Endothelial cell of umbilical vein (primary cell): ENCODE measurements at regions of chr18 and their contacts with region 1.

Region 1: DNA sequence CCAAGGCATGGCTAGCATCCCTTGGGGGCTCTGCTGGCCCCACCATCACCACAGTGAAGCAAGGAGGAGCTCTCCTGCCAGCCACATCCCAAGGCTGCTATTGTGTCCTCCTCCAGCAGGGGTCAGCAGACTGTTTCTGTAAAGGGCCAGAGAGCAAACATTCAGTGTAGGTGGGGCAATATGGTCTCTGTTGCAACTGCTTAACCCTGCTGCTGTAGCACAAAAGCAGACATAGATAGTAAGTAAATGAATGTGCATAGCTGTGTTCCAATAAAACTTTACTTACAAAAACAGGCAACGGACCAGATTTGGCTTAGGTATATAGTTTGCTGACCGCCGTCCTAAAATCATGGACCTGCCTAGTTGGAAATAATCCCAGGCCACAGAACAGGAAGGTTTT is 36.4 kb upstream of the ZBTB7C start:
- DNase-seq: peak; percentile 64
- H3K4me3 ChIP-seq: no peak overlapping the region
- H3K27ac ChIP-seq: no peak overlapping the region
- H3K4me1 ChIP-seq: peaks cover 7% of the 10 kb centered on the region
- H3K27me3 ChIP-seq: peaks cover 23 to 34% of the 10 kb centered on the region in 2 experiments
- CTCF ChIP-seq: peak; percentile 89 to 95
- POLR2A ChIP-seq: no peak

Region 2: DNA sequence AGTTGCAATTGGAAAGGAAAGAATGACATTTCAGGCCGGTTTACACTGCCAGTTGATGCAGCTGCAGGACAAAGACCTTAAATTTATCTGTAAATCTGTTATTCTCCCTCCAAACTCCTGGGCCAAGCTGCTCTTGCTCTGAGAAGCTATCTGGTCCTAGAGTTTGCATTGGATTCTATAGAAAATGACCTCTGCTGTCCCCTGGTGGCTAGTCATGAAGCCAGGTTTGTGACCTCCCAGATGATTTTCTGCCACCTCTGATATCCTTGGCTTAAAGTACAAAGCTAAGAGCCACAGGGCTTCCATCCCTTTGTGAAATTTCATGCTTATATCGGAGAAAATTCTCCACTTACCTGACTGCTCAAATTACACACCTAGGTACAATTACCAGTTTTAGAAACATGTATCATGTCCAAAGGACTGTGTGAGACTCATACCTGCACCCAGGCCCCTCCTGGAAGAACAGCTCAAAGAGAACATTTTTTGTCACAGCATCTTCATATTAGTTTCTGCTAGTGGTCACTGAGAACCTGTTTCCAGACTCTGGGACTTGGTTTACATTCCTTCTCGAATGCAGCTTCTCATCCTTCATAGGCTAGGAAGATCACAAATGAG is 1240.5 kb before region 1 on chr18:
- CTCF ChIA-PET with region 1: no interaction called
- POLR2A ChIA-PET with region 1: no interaction called
- dilution Hi-C with region 1: no loop called
- intact Hi-C with region 1: no loop called
- DNase-seq: peak; percentile 48
- H3K4me3 ChIP-seq: no peak overlapping the region
- H3K27ac ChIP-seq: no peak overlapping the region
- H3K4me1 ChIP-seq: no peaks in the 10 kb centered on the region
- H3K27me3 ChIP-seq: peaks cover 5 to 12% of the 10 kb centered on the region in 2 experiments
- CTCF ChIP-seq: peak; percentile 73 to 78
- POLR2A ChIP-seq: no peak

Region 3: DNA sequence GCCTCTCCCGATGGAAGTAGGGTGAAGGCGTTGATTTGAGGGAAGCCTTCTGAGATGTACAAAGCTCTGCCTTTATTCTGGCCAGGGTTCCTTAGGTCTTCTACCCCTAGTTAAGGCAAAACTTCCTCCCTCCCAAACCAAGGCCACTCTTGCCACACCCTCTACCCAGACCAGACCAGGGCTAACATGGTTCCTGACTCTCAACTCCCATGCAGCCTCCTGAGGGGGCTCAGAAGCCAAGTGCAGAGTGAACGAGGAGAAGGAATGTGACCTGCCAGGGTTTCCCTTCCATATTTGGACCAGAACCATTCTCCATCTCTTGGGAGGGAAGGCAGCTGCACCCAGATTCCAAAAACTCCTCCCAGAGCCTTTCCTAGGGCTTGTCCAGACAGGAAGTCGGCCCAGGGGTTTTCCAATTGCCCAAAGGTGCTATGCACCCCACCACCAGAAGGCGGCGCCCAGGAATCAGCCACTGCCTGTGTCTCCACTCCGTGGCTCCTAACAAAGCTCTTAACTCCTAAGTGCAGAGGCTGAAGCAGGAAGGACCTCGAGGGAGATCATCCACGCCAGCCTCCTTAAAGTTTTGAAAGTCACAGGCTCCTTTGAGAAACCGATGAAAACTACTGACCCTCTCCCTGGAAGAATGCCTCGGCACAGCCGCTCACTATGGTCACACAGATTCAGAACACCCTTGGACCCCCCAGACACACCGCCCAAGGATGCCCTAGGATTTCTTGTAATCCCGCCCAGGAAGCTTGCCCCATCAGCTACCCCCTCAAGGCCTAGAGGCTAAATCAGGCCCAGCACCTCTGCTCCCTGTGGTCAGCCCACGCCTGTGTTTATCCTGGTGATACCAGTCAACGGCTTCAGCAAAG is 672.9 kb before region 1 on chr18:
- CTCF ChIA-PET with region 1: interaction called, 8 read pairs
- POLR2A ChIA-PET with region 1: no interaction called
- dilution Hi-C with region 1: no loop called
- intact Hi-C with region 1: loop called (anchors 1 kb)
- DNase-seq: peak; percentile 76
- H3K4me3 ChIP-seq: no peak overlapping the region
- H3K27ac ChIP-seq: no peak overlapping the region
- H3K4me1 ChIP-seq: no peaks in the 10 kb centered on the region
- H3K27me3 ChIP-seq: peaks cover 4% of the 10 kb centered on the region in 2 experiments
- CTCF ChIP-seq: peak; percentile 73 to 95
- POLR2A ChIP-seq: no peak

Region 4: GRCh38 chr18:48030616-48031480 is 414.7 kb before region 1 on chr18:
- CTCF ChIA-PET with region 1: interaction called, 37 read pairs
- POLR2A ChIA-PET with region 1: no interaction called
- dilution Hi-C with region 1: no loop called
- intact Hi-C with region 1: loop called (anchors 1 kb)
- DNase-seq: peak; percentile 35
- H3K4me3 ChIP-seq: no peak overlapping the region
- H3K27ac ChIP-seq: no peak overlapping the region
- H3K4me1 ChIP-seq: no peaks in the 10 kb centered on the region
- H3K27me3 ChIP-seq: no peaks in the 10 kb centered on the region
- CTCF ChIP-seq: peak; percentile 66 to 72
- POLR2A ChIP-seq: no peak

Region 5: GRCh38 chr18:48161191-48161910 is 284.2 kb before region 1 on chr18:
- CTCF ChIA-PET with region 1: interaction called, 3 read pairs
- POLR2A ChIA-PET with region 1: no interaction called
- dilution Hi-C with region 1: no loop called
- intact Hi-C with region 1: loop called (anchors 5 kb)
- DNase-seq: peak; percentile 26
- H3K4me3 ChIP-seq: peak overlapping the region; percentile 12 to 54 (median 46)
- H3K27ac ChIP-seq: no peak overlapping the region
- H3K4me1 ChIP-seq: peaks cover 4% of the 10 kb centered on the region
- H3K27me3 ChIP-seq: peaks cover 7 to 10% of the 10 kb centered on the region in 2 experiments
- CTCF ChIP-seq: no peak
- POLR2A ChIP-seq: no peak

Region 6: GRCh38 chr18:48410095-48410920 is 35.2 kb before region 1 on chr18:
- CTCF ChIA-PET with region 1: interaction called, 11 read pairs
- POLR2A ChIA-PET with region 1: no interaction called
- dilution Hi-C with region 1: no loop called
- intact Hi-C with region 1: loop called (anchors 1 kb)
- DNase-seq: peak; percentile 84
- H3K4me3 ChIP-seq: peak overlapping the region; percentile 42 to 52 (median 49)
- H3K27ac ChIP-seq: no peak overlapping the region
- H3K4me1 ChIP-seq: peaks cover 4% of the 10 kb centered on the region
- H3K27me3 ChIP-seq: peaks cover 37 to 55% of the 10 kb centered on the region in 2 experiments
- CTCF ChIP-seq: no peak
- POLR2A ChIP-seq: no peak

Region 7: GRCh38 chr18:48455555-48456478 is 10.3 kb after region 1 on chr18:
- CTCF ChIA-PET with region 1: interaction called, 24 read pairs
- POLR2A ChIA-PET with region 1: no interaction called
- dilution Hi-C with region 1: no loop called
- intact Hi-C with region 1: no loop called
- DNase-seq: no peak
- H3K4me3 ChIP-seq: no peak overlapping the region
- H3K27ac ChIP-seq: no peak overlapping the region
- H3K4me1 ChIP-seq: no peaks in the 10 kb centered on the region
- H3K27me3 ChIP-seq: peaks cover 13 to 27% of the 10 kb centered on the region in 2 experiments
- CTCF ChIP-seq: no peak
- POLR2A ChIP-seq: no peak

Region 8: GRCh38 chr18:48470484-48471180 is 25.1 kb after region 1 on chr18:
- CTCF ChIA-PET with region 1: interaction called, 14 read pairs
- POLR2A ChIA-PET with region 1: no interaction called
- dilution Hi-C with region 1: no loop called
- intact Hi-C with region 1: no loop called
- DNase-seq: no peak
- H3K4me3 ChIP-seq: no peak overlapping the region
- H3K27ac ChIP-seq: no peak overlapping the region
- H3K4me1 ChIP-seq: no peaks in the 10 kb centered on the region
- H3K27me3 ChIP-seq: peaks cover 12 to 29% of the 10 kb centered on the region in 2 experiments
- CTCF ChIP-seq: no peak
- POLR2A ChIP-seq: no peak